Right ventricle myocardium inferior (tissue), 1 donor: ENCODE measurements at regions of chr1 and their contacts with region 1.

Region 1: GRCh38 chr1:52927212-52928014 is at the start of gene SCP2:
- DNase-seq: peak; percentile 93
- ATAC-seq: peak; percentile 96
- total RNA-seq, gene SCP2: 132 TPM

Region 2: DNA sequence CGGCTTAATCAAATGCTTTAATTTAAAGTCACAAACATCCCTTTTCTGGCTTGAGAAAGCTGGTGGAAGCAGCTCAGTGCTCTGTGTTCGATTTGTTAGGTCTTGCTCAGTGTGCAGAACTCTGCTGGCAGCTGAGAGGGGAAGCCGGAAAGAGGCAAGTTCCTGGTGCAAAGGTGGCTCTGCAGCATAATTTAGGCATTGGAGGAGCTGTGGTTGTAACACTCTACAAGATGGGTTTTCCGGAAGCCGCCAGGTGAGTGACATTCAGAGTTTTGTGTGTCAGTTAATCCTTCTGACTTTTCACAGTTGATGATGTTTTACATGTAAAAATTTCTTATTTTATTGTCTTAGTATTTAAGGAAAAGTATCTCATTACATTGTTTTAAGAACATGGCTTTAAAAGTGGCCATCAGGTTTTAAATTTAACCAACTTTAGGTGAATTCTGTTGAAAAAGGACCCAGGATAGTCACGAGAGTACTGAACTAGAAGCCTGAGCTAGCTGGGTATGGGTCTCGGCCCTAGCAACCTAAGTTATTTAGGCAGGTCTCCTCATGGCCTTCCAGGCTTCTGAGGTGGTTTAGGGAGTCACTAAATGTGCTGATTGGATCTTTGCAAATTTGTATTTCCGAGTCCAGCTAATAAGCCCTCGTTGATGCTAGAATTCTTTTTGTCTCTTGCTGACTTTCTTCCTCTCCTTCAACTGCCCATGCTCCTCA is 87.5 kb after region 1 on chr1:
- intact Hi-C with region 1: no loop called
- DNase-seq: peak; percentile 75
- ATAC-seq: peak; percentile 94

Region 3: DNA sequence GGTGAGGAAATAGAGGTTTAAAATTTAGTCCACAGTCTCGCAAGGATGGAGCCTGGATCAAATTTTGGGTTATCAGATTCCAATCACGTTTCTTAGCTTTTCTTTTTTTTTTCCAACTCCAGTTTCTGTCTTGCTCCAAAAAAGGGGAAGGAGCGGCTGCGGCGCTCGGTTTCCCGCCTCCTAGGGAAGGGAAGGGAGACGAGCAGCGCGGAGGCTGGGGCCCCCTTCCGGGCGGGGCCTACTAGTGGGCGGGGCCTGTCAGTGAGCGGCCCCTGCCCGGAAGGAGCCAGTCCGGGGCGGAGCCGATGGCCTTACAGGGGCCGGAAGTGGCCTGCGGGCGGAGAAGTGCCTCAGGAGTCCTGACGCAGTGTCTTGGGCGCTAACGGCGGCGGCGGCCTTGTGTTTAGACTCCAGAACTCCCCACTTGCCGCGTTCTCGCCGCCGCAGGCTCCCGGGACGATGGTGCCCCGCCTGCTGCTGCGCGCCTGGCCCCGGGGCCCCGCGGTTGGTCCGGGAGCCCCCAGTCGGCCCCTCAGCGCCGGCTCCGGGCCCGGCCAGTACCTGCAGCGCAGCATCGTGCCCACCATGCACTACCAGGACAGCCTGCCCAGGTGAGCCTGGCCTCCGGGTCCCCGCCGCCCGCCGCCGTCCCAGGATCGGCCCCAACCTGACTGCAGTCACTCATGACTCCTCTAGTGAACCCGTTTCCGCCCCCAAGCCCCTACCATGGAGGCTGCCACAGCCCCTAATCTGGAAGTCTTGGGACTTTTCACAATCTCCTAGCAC is 269.3 kb after region 1 on chr1 and contains the start of gene CPT2:
- intact Hi-C with region 1: loop called (anchors 5 kb)
- DNase-seq: peak; percentile 99
- ATAC-seq: peak; percentile 98
- total RNA-seq, gene CPT2: 37.7 TPM